Posterior cingulate gyrus (tissue), 11 donors: ENCODE measurements at regions of chrX and their contacts with region 1.

Region 1: GRCh38 chrX:132292793-132293192 is 73.5 kb upstream of the RAP2C start:
- DNase-seq: peak in 1 of 10 donors; percentile 28

Region 2: GRCh38 chrX:132532955-132533354 is 240.2 kb after region 1 on chrX:
- intact Hi-C with region 1: no loop called
- DNase-seq: no peak

Region 3: DNA sequence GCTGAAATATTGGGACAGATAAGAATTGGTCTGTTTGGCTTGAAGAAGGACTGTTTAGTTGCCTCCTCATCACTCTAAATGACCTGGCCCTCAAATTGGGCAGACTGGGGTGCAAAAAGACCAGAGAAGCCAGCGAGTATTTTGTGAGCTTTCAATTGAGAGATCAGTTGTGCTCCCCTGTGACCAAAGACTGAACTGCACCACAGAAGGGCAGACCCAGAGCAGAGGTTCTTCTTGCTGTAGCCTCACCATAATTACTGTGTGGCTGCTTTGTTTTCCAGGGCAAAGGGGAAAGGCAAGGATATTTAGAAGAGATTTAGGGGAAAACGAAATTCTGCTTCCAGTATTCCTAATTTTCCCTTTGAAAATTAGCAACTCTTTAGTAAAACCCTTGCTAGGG is 300.1 kb after region 1 on chrX:
- intact Hi-C with region 1: loop called (anchors 2 kb)
- DNase-seq: peak in 1 of 10 donors; percentile 14

Region 4: GRCh38 chrX:132631579-132632232 is 338.9 kb after region 1 on chrX:
- intact Hi-C with region 1: loop called (anchors 5 kb)
- DNase-seq: no peak